ENCODE measurements at regions of chr9 and their contacts with region 1.

Region 1: GRCh38 chr9:71121275-71122021 is at the start of gene TRPM3:
- DNase-seq: no peak
- H3K4me3 ChIP-seq: peak within 1 kb of the TSS in 1 of 3 donors; percentile 12
- H3K27ac ChIP-seq: no peak within 1 kb of the TSS
- H3K4me1 ChIP-seq: no peaks in the 10 kb centered on the region
- H3K27me3 ChIP-seq: peaks cover 0 to 34% of the 10 kb centered on the region in 2 donors
- CTCF ChIP-seq: no peak
- POLR2A ChIP-seq: no peak
- total RNA-seq, gene TRPM3: 0.33 to 0.88 (median 0.64) TPM

Region 2: DNA sequence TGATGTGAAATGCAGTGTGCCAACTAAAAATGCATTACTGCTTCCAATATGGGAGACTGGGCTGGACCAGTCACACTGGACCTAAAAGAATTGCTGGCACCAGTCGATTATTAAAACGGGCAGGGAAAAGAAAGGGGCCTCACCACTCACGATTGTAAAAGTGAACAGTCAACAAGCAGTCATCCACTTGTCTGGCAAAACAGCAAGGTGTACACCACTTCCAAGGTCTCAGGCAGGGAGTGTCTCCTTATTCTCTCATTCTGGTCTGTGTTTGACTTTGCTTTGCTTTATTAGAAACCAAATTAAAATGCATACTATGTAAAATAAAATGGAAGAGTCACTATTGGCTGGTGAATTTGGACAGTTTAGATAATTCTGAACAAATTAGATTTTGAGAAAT is 57.7 kb after region 1 on chr9:
- intact Hi-C with region 1: no loop called
- DNase-seq: no peak
- H3K4me3 ChIP-seq: no peak overlapping the region
- H3K27ac ChIP-seq: no peak overlapping the region
- H3K4me1 ChIP-seq: no peaks in the 10 kb centered on the region
- H3K27me3 ChIP-seq: no peaks in the 10 kb centered on the region
- CTCF ChIP-seq: no peak
- POLR2A ChIP-seq: no peak

Region 3: DNA sequence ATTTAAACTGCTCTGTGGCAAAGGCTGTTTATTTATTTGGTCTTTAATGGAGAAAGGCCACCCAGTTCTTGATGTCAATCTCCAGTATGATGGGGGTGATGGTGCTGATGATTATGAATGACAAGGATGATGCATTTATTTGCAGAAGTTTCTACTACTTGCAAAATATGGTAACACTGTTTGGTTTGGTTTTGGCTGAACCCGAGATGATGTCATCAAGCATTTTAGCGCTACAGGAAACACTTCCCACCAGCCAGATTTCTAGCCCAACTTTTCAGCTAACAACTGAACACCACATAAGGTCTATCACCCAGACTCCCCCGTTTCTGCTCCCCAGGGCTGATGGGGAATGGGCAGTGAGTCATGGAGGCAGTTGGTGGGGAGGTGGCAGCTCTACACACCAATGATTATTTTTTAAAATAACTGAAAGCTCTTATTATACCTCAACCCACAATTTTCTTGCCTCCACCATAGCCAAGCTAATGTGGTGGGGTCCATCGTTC is 343.9 kb after region 1 on chr9:
- intact Hi-C with region 1: loop called (anchors 5 kb)
- DNase-seq: no peak
- H3K4me3 ChIP-seq: no peak overlapping the region
- H3K27ac ChIP-seq: no peak overlapping the region
- H3K4me1 ChIP-seq: no peaks in the 10 kb centered on the region
- H3K27me3 ChIP-seq: no peaks in the 10 kb centered on the region
- CTCF ChIP-seq: no peak
- POLR2A ChIP-seq: no peak